ENCODE measurements at regions of chr4 and their contacts with region 1.

Region 1: DNA sequence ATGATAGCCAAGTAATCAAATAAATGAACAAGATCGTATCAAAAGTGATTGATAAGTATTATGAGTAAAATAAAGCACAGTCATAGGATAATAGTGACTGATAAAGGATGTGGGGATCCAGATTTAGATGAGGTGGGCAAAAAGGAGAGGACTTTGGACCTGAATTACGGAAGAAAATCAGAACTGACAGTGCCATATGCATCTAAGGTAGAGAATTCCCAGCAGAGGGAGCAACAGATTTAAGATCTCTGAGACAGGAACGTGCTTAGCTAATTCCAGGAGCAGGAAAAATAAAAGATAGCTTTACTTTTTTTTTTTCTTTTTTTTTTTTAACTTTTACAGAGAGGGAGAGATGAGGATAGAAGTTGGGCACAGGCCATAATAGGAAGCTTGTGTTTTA is 189.9 kb downstream of the NWD2 start:
- DNase-seq: no peak
- ATAC-seq: no peak
- H3K4me3 ChIP-seq: no peak overlapping the region
- H3K27ac ChIP-seq: no peak overlapping the region
- H3K4me1 ChIP-seq: no peaks in the 10 kb centered on the region
- H3K27me3 ChIP-seq: no peaks in the 10 kb centered on the region; a peak in 1 of 4 replicates
- CTCF ChIP-seq: no peak
- EP300 ChIP-seq: no peak
- POLR2A ChIP-seq: no peak
- RAD21 ChIP-seq: no peak

Region 2: DNA sequence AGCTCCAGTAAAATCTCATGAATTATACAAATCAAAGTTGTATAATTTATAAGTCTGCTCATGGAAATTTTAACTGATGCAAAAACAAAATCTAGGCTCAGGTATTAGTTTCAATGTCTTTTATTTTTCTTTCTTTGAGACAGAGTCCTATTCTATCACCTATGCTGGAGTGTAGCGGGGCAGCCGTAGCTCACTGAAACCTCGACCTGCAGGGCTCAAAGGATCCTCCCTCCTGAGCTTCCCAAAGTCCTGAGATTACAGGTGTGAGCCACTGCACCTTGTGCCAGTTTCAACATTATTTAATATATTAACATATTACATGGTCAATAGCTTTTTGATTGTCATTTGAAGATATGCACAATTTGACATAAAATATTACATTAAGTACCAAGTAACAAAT is 1868.8 kb before region 1 on chr4:
- CTCF ChIA-PET with region 1: no interaction called
- POLR2A ChIA-PET with region 1: no interaction called
- RAD21 ChIA-PET with region 1: no interaction called
- SMC1A ChIA-PET with region 1: no interaction called
- in situ Hi-C with region 1: no loop called
- intact Hi-C with region 1: no loop called
- DNase-seq: no peak
- ATAC-seq: no peak
- H3K4me3 ChIP-seq: no peak overlapping the region
- H3K27ac ChIP-seq: no peak overlapping the region
- H3K4me1 ChIP-seq: no peaks in the 10 kb centered on the region
- H3K27me3 ChIP-seq: no peaks in the 10 kb centered on the region
- CTCF ChIP-seq: no peak
- EP300 ChIP-seq: no peak
- POLR2A ChIP-seq: no peak
- RAD21 ChIP-seq: no peak

Region 3: DNA sequence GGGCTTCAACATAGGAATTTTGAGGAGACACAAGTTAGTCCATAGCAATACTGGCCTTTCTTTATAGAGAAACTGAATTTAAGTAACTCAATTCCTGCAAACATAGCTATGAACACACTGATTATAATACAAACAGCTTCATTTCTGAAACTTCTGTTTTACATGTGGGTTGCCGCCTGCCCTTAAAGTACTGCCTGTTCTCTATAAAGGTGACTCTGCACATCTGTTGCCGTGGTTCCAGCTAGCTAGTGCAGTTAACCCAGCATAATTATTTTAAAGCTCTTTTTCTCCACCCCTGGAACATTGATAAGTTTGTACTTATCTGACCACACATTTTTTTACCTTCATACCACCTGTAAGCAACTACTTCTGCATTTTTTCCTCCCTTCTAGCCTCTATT is 12.4 kb before region 1 on chr4:
- CTCF ChIA-PET with region 1: interaction called, 4 read pairs
- POLR2A ChIA-PET with region 1: interaction called, 4 read pairs
- RAD21 ChIA-PET with region 1: no interaction called
- SMC1A ChIA-PET with region 1: interaction called, 11 read pairs
- in situ Hi-C with region 1: no loop called
- intact Hi-C with region 1: no loop called
- DNase-seq: no peak
- ATAC-seq: no peak
- H3K4me3 ChIP-seq: no peak overlapping the region
- H3K27ac ChIP-seq: no peak overlapping the region
- H3K4me1 ChIP-seq: no peaks in the 10 kb centered on the region
- H3K27me3 ChIP-seq: no peaks in the 10 kb centered on the region
- CTCF ChIP-seq: no peak
- EP300 ChIP-seq: no peak
- POLR2A ChIP-seq: no peak
- RAD21 ChIP-seq: no peak

Region 4: GRCh38 chr4:37767546-37767945 is 333.1 kb after region 1 on chr4:
- CTCF ChIA-PET with region 1: no interaction called
- POLR2A ChIA-PET with region 1: no interaction called
- RAD21 ChIA-PET with region 1: no interaction called
- SMC1A ChIA-PET with region 1: no interaction called
- in situ Hi-C with region 1: no loop called
- intact Hi-C with region 1: loop called (anchors 10 kb)
- DNase-seq: no peak
- ATAC-seq: no peak
- H3K4me3 ChIP-seq: no peak overlapping the region
- H3K27ac ChIP-seq: no peak overlapping the region
- H3K4me1 ChIP-seq: no peaks in the 10 kb centered on the region; the same call in 1 of the 2 replicates
- H3K27me3 ChIP-seq: no peaks in the 10 kb centered on the region
- CTCF ChIP-seq: no peak
- EP300 ChIP-seq: no peak
- POLR2A ChIP-seq: no peak
- RAD21 ChIP-seq: no peak